PC-9 (cell line): ENCODE measurements at regions of chr14 and their contacts with region 1.

Region 1: DNA sequence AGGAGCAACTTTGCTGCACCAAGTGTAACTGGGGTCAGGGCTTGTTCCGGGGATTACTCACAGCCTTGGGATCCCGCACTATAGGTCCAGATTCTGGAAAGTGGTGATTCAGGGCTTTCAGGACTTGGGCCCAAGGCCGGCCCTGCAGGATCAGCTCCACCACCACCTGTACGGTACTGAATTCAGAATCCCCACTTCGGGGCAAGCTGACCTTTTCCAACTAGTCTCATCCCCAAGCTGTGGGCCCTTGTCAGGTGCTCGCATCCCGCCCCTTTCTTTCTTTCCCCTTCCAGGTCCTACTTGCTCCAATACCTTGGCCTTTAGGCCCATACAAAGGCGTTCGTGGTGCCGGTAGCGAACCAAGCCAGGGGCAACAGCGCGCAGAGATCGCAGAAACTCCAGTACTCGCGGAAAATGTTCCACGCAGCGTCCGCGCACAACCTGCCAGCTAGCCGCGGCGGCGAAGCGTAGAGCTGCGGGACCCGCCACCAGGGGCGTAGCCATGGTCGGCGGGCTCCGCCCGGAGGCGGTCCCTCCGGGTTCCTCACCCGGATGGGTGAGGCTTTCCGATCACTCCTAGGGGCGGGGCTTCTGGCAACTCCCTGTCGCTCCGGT is 487 bp downstream of the TINF2 start:
- DNase-seq: peak; percentile 75 to 88
- H3K4me3 ChIP-seq: peak overlapping the region; percentile 86
- H3K27ac ChIP-seq: peak overlapping the region; percentile 92
- H3K4me1 ChIP-seq: peaks cover 6% of the 10 kb centered on the region
- H3K27me3 ChIP-seq: no peaks in the 10 kb centered on the region
- CTCF ChIP-seq: peak; percentile 56

Region 2: GRCh38 chr14:24058260-24058950 is 183.5 kb before region 1 on chr14:
- CTCF ChIA-PET with region 1: no interaction called
- POLR2A ChIA-PET with region 1: no interaction called
- intact Hi-C with region 1: loop called (anchors 2 kb)
- DNase-seq: peak in 1 of 2 experiments; percentile 70
- H3K4me3 ChIP-seq: no peak overlapping the region
- H3K27ac ChIP-seq: no peak overlapping the region
- H3K4me1 ChIP-seq: no peaks in the 10 kb centered on the region
- H3K27me3 ChIP-seq: peaks cover 24% of the 10 kb centered on the region
- CTCF ChIP-seq: peak; percentile 84

Region 3: GRCh38 chr14:24274101-24274543 is 32.2 kb after region 1 on chr14:
- CTCF ChIA-PET with region 1: interaction called, 4 read pairs
- POLR2A ChIA-PET with region 1: no interaction called
- intact Hi-C with region 1: loop called (anchors 2 kb)
- DNase-seq: peak; percentile 41 to 86
- H3K4me3 ChIP-seq: no peak overlapping the region
- H3K27ac ChIP-seq: peak overlapping the region; percentile 75
- H3K4me1 ChIP-seq: peaks cover 24% of the 10 kb centered on the region
- H3K27me3 ChIP-seq: no peaks in the 10 kb centered on the region
- CTCF ChIP-seq: no peak

Region 4: GRCh38 chr14:24280797-24281460 is 39.0 kb after region 1 on chr14:
- CTCF ChIA-PET with region 1: no interaction called
- POLR2A ChIA-PET with region 1: interaction called, 18 read pairs
- intact Hi-C with region 1: no loop called
- DNase-seq: no peak
- H3K4me3 ChIP-seq: no peak overlapping the region
- H3K27ac ChIP-seq: no peak overlapping the region
- H3K4me1 ChIP-seq: peaks cover 8% of the 10 kb centered on the region
- H3K27me3 ChIP-seq: no peaks in the 10 kb centered on the region
- CTCF ChIP-seq: no peak

Region 5: DNA sequence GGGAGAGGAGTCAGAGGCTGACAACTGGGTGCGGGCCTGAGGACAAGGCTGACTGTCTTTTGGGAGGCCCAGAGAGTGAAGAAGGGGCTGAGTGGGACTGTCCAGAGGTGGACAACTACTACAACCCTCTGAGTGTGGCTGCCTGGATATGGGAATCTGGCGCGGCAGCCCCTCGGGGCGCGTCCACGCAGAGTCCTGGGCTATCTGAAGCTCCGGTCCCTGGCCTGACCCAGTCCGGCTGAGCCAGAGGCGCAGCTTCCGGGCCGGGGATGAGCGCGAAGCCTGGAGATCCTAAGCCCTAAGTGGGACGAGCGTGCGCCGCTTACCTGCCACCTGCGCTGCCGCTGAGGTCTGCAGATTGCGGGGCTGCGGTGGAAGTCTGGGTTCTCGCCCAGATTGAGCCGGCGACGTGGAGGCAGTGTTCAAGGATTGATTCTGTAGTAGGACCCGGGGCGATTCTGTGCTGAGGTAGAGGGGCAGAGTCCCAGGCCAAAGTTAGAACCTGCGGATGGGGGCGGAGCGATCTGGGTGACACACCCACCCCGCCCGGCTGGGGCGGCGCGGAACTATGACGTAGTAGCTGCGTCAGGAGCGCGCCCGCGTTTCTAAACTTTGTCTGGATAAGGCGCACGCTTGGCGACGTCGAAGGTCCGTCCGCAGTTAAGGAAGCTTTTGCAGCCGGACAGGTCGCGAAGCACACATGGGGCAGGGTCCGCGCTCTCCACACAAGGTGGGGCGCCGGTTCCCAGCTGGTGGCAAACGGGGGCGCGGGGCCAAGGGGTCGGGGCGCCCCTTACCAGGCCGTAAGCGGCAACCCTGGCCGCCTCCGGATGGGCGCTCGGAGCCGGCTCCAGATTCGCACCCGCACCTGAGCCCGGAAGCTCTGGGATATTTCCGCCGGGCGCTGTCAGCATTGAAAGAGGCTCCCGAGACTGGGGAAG is 57.6 kb after region 1 on chr14 and contains the starts of genes DHRS1 and NOP9:
- CTCF ChIA-PET with region 1: interaction called, 16 read pairs
- POLR2A ChIA-PET with region 1: interaction called, 19 read pairs
- intact Hi-C with region 1: loop called (anchors 1 kb)
- DNase-seq: peak; percentile 68 to 86
- H3K4me3 ChIP-seq: peak within 1 kb of the TSS; percentile 88
- H3K27ac ChIP-seq: peak within 1 kb of the TSS; percentile 53
- H3K4me1 ChIP-seq: peaks cover 16% of the 10 kb centered on the region
- H3K27me3 ChIP-seq: no peaks in the 10 kb centered on the region
- CTCF ChIP-seq: no peak
- total RNA-seq, gene DHRS1: 37.9 and 41.4 TPM in 2 replicates
- total RNA-seq, gene NOP9: 24.4 and 31.1 TPM in 2 replicates

Region 6: GRCh38 chr14:24307575-24308341 is 65.8 kb after region 1 on chr14 and contains the start of gene CIDEB:
- CTCF ChIA-PET with region 1: interaction called, 21 read pairs
- POLR2A ChIA-PET with region 1: no interaction called
- intact Hi-C with region 1: no loop called
- DNase-seq: peak in 1 of 2 experiments; percentile 50
- H3K4me3 ChIP-seq: no peak within 1 kb of the TSS
- H3K27ac ChIP-seq: no peak within 1 kb of the TSS
- H3K4me1 ChIP-seq: no peaks in the 10 kb centered on the region
- H3K27me3 ChIP-seq: no peaks in the 10 kb centered on the region
- CTCF ChIP-seq: peak; percentile 80
- total RNA-seq, gene CIDEB: not detected in 2 replicates

Region 7: DNA sequence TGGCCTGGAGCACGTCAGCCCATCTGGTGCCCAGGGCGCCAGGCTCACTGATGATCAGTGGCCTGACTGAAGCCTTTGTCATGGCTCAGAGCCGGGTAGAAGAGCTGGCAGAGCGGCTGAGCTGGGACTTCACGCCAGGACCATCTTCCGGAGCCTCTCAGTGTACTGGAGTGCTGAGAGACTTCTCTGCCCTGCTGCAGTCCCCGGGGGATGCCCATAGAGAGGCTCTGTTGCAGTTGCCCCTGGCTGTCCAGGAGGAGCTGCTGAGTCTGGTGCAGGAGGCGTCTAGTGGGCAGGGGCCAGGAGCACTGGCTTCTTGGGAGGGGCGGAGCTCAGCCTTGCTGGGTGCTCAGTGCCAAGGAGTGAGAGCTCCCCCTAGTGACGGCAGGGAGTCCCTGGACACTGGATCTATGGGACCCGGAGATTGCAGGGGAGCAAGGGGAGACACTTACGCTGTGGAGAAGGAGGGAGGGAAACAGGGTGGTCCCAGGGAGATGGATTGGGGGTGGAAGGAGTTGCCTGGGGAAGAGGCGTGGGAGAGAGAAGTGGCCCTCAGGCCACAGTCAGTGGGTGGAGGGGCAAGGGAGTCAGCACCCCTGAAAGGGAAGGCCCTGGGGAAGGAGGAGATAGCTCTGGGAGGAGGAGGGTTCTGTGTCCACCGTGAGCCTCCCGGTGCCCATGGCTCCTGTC is 189.8 kb after region 1 on chr14:
- CTCF ChIA-PET with region 1: no interaction called
- POLR2A ChIA-PET with region 1: interaction called, 6 read pairs
- intact Hi-C with region 1: loop called (anchors 5 kb)
- DNase-seq: peak; percentile 75 to 85
- H3K4me3 ChIP-seq: peak overlapping the region; percentile 64; the same call in 1 of the 2 replicates
- H3K27ac ChIP-seq: no peak overlapping the region
- H3K4me1 ChIP-seq: peaks cover 9% of the 10 kb centered on the region
- H3K27me3 ChIP-seq: no peaks in the 10 kb centered on the region
- CTCF ChIP-seq: peak; percentile 92